ENCODE measurements at regions of chr17 and their contacts with region 1.

Region 1: DNA sequence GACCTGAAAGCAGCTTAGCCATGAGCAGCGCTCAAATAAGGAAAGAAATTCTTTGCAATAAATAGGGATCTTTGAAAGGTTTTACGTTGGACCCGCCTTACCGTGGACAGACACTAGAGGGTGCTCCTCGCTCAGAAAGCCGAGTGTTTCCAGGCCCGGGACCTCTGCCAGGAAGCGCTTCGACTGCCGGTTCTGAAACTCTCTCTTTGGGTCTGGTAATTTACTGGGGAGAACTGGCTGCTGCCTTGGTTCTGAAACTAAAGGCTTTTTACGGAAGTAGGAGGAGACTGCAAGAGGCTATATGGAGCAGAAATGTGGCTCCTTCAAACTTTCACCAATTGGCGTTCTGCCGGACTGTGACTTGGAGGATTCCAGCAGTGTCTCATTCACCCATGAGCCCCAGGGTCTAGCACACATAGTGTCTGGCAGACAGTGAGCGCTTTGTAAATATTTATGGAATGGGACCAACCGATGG is 45.6 kb upstream of the HOXB9 start:
- DNase-seq: peak; percentile 46
- H3K4me3 ChIP-seq: peak overlapping the region; percentile 40 to 55 (median 49)
- H3K27ac ChIP-seq: no peak overlapping the region
- H3K4me1 ChIP-seq: no peaks in the 10 kb centered on the region
- H3K27me3 ChIP-seq: no peaks in the 10 kb centered on the region
- CTCF ChIP-seq: peak; percentile 76 to 93

Region 2: DNA sequence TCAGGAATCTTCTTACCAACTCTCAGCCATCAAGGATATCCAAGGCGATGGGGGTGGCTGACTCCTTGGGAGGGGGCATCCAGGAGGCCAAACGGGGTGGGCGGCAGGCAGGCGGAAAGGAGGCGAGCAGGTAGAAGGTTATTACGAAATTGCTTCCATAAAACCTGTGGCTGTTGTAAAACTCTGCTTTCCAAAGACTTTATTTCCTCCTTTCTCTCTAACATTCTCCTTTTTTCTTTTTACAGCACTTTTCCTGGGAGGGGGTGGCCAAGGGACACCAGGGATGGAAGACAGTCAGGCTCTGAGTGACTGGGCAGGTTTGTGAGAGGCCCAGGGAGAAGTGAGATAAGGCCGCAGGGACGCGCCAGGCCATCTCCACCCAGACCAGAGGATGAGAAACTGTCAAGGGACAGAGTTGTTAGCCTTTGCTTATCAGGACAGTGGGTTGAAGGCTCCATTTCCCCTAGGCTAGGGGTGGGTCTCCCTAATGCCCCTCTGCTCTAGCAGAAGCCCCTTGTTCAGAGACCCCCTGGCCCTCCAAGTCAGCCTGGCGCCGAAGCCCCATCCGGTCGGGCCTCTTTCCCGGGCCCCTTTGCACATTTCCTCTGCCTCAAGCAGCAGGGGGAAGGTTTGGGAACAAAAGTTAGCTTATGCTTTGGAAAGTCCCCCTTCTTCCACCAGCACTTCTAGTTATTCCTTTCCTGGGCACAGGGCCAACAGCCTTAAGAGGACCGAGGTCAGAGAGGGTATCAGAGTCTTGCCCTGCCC is 40.6 kb before region 1 on chr17:
- CTCF ChIA-PET with region 1: no interaction called
- dilution Hi-C with region 1: loop called (anchors 5 kb)
- in situ Hi-C with region 1: no loop called
- intact Hi-C with region 1: no loop called
- DNase-seq: no peak
- H3K4me3 ChIP-seq: no peak overlapping the region
- H3K27ac ChIP-seq: no peak overlapping the region
- H3K4me1 ChIP-seq: no peaks in the 10 kb centered on the region
- H3K27me3 ChIP-seq: peaks cover 78% of the 10 kb centered on the region
- CTCF ChIP-seq: no peak

Region 3: GRCh38 chr17:48724251-48725003 is 52.7 kb after region 1 on chr17:
- CTCF ChIA-PET with region 1: interaction called, 5 read pairs
- dilution Hi-C with region 1: no loop called
- in situ Hi-C with region 1: no loop called
- intact Hi-C with region 1: loop called (anchors 2 kb)
- DNase-seq: peak; percentile 51
- H3K4me3 ChIP-seq: no peak overlapping the region
- H3K27ac ChIP-seq: no peak overlapping the region
- H3K4me1 ChIP-seq: no peaks in the 10 kb centered on the region
- H3K27me3 ChIP-seq: peaks cover 83% of the 10 kb centered on the region
- CTCF ChIP-seq: peak; percentile 54 to 76

Region 4: GRCh38 chr17:48767263-48767774 is 95.6 kb after region 1 on chr17:
- CTCF ChIA-PET with region 1: no interaction called
- dilution Hi-C with region 1: loop called (anchors 5 kb)
- in situ Hi-C with region 1: no loop called
- intact Hi-C with region 1: no loop called
- DNase-seq: no peak
- H3K4me3 ChIP-seq: no peak overlapping the region
- H3K27ac ChIP-seq: no peak overlapping the region
- H3K4me1 ChIP-seq: no peaks in the 10 kb centered on the region
- H3K27me3 ChIP-seq: peaks cover 3% of the 10 kb centered on the region
- CTCF ChIP-seq: no peak

Region 5: DNA sequence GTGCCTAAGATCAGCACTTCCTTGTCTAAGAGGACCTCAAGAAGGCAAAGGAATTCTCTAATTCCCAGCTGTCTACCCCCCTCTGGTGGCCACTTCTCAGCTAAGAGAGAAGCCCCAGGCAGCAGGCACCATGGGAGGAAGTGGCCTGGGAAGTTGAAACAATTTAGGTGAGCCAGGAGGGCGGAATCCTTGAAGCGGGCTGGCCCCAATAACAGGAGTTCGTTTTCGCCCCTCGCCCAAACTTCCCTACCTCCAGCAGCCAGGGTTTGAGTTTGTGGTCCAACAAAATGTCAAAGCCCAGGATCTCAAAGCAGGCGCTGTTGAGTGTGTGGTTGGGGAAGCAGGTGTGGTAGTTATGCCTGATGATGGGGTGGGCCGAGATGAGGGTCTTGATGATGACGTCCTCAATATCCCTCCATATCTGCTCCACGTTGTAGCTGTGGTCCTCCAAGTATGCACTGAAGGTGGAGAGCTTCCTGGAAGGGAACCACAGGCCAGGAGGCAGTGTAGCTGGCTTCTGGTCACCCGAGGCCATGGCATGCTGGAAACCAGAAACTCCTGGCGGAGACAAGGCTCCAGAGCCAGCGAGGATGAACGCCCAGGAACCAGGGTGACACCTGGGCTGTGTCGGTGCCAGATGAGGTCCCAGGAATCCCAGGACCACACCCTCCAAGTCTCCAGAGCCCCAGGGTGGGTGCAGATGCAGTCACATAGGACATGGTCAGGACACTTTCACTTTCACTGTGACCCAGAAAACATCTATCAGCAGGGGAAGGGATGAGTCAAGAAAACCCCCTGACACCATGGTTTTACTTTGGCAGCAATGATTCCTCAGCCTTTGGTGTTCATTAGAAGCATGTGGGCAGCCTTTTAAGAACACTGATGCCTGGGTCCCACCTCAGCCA is 119.6 kb after region 1 on chr17:
- CTCF ChIA-PET with region 1: interaction called, 13 read pairs
- dilution Hi-C with region 1: no loop called
- in situ Hi-C with region 1: loop called (anchors 10 kb)
- intact Hi-C with region 1: loop called (anchors 1 kb)
- DNase-seq: peak; percentile 68
- H3K4me3 ChIP-seq: no peak overlapping the region
- H3K27ac ChIP-seq: no peak overlapping the region
- H3K4me1 ChIP-seq: no peaks in the 10 kb centered on the region
- H3K27me3 ChIP-seq: no peaks in the 10 kb centered on the region
- CTCF ChIP-seq: peak; percentile 72 to 82